ENCODE measurements at regions of chr10 and their contacts with region 1.

Region 1: GRCh38 chr10:123021517-123021916 is 12.7 kb downstream of the ACADSB start:
- DNase-seq: no peak
- CTCF ChIP-seq: peak; percentile 18

Region 2: GRCh38 chr10:123559066-123559822 is 537.7 kb after region 1 on chr10:
- in situ Hi-C with region 1: loop called (anchors 10 kb)
- DNase-seq: peak; percentile 90
- CTCF ChIP-seq: peak; percentile 96